Mammary epithelial cell (primary cell): ENCODE measurements at regions of chr21 and their contacts with region 1.

Region 1: DNA sequence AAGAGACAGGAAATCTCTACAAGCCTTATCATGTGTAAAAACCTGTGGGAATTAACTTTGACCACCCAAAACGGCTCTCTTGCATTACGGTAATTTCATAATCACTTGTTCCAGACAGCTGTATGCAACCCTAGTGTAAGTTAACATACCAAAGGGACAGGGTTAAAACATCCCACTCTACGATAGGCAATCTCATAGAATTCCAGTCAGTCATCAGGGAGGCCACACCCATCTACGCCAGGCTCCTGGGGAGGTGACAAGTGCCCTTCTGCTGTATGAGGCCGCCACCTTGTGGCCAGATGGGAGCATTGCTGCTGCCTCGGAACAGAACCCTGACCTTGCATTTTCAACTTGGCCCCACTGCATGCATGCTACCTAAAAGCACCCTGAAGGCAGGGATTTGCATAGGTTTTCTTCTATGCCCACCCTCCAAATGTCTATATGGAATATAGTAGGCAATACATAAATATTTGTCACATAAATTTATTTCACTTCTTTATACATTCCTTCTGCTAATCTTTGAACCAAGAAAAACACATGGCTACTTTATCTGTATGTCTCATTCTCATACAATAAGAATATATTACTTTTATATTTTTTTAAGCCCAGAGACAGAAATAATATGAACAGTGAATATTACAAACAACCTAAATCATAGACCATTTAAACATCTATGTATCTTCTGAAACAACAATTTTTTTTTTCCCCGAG is 12.6 kb downstream of the HSF2BP start:
- DNase-seq: peak; percentile 87
- H3K4me3 ChIP-seq: no peak overlapping the region
- H3K27ac ChIP-seq: peak overlapping the region; percentile 44
- H3K4me1 ChIP-seq: peaks cover 19% of the 10 kb centered on the region
- H3K27me3 ChIP-seq: no peaks in the 10 kb centered on the region
- CTCF ChIP-seq: peak; percentile 99

Region 2: GRCh38 chr21:43012595-43012994 is 634.1 kb before region 1 on chr21:
- CTCF ChIA-PET with region 1: interaction called, 17 read pairs
- dilution Hi-C with region 1: no loop called
- in situ Hi-C with region 1: no loop called
- intact Hi-C with region 1: no loop called
- DNase-seq: peak; percentile 71
- H3K4me3 ChIP-seq: no peak overlapping the region
- H3K27ac ChIP-seq: no peak overlapping the region
- H3K4me1 ChIP-seq: no peaks in the 10 kb centered on the region
- H3K27me3 ChIP-seq: no peaks in the 10 kb centered on the region
- CTCF ChIP-seq: no peak

Region 3: DNA sequence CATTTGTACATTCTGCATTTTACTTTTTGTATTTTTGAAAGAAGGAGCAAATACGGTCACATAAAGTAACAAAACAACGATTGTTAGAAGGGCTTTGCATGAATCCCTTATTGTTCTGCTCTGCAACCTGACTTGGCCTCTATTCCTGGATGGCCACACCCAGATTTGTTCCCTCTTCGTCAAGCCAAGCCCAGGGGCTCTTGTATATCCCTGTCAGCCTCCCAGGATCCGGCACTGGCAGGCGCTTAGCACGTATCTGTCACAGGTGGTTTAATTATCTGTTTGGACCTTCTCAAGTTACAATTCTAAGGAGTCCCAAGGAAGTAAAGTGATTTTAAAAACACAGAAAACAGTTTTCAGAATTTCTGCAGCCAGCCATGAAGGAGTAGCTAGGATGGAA is 449.9 kb before region 1 on chr21:
- CTCF ChIA-PET with region 1: no interaction called
- dilution Hi-C with region 1: no loop called
- in situ Hi-C with region 1: no loop called
- intact Hi-C with region 1: loop called (anchors 1 kb)
- DNase-seq: peak; percentile 92
- H3K4me3 ChIP-seq: peak overlapping the region in 1 of 3 experiments; percentile 5
- H3K27ac ChIP-seq: peak overlapping the region; percentile 96
- H3K4me1 ChIP-seq: peaks cover 57% of the 10 kb centered on the region
- H3K27me3 ChIP-seq: no peaks in the 10 kb centered on the region
- CTCF ChIP-seq: no peak

Region 4: DNA sequence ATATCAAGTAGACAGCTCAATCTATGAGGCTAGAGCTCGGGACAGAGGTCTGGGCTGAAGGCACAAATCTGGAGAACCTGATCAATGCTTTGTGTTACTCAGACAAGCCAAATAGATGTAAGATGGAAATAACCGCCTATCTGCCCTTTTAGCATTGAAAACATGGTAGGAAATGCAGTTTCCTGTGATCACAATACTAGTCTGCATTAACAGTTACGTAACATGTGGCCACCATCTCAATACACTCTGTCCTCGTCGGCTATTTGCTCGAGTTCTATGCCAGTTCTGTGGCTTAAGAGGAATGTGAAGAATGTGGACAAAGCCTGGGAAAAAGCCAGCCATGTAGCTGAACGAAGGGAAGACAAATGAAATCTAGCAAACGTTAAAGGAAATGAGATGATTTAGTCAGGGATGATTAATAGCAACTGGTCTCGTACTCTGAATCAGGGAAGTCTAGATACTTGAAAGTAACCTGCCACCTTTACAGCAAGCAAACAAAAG is 60.7 kb before region 1 on chr21:
- CTCF ChIA-PET with region 1: no interaction called
- dilution Hi-C with region 1: no loop called
- in situ Hi-C with region 1: no loop called
- intact Hi-C with region 1: loop called (anchors 2 kb)
- DNase-seq: peak; percentile 100
- H3K4me3 ChIP-seq: no peak overlapping the region
- H3K27ac ChIP-seq: peak overlapping the region; percentile 100
- H3K4me1 ChIP-seq: peaks cover 51% of the 10 kb centered on the region
- H3K27me3 ChIP-seq: no peaks in the 10 kb centered on the region
- CTCF ChIP-seq: no peak

Region 5: GRCh38 chr21:43611598-43612369 is 34.9 kb before region 1 on chr21:
- CTCF ChIA-PET with region 1: interaction called, 4 read pairs
- dilution Hi-C with region 1: no loop called
- in situ Hi-C with region 1: no loop called
- intact Hi-C with region 1: loop called (anchors 1 kb)
- DNase-seq: peak; percentile 57
- H3K4me3 ChIP-seq: no peak overlapping the region
- H3K27ac ChIP-seq: no peak overlapping the region
- H3K4me1 ChIP-seq: peaks cover 36% of the 10 kb centered on the region
- H3K27me3 ChIP-seq: no peaks in the 10 kb centered on the region
- CTCF ChIP-seq: peak; percentile 72 to 87

Region 6: GRCh38 chr21:43687566-43688286 is 41.0 kb after region 1 on chr21:
- CTCF ChIA-PET with region 1: no interaction called
- dilution Hi-C with region 1: no loop called
- in situ Hi-C with region 1: no loop called
- intact Hi-C with region 1: no loop called
- DNase-seq: no peak
- H3K4me3 ChIP-seq: no peak overlapping the region
- H3K27ac ChIP-seq: no peak overlapping the region
- H3K4me1 ChIP-seq: peaks cover 19% of the 10 kb centered on the region
- H3K27me3 ChIP-seq: no peaks in the 10 kb centered on the region
- CTCF ChIP-seq: no peak